Tibial artery (tissue), 4 donors: ENCODE measurements at regions of chr6 and their contacts with region 1.

Region 1: GRCh38 chr6:168370310-168370991 is 50.9 kb upstream of the DACT2 start:
- DNase-seq: peak; percentile 57 to 84
- H3K4me3 ChIP-seq: no peak overlapping the region
- H3K27ac ChIP-seq: no peak overlapping the region
- H3K4me1 ChIP-seq: peaks cover 0 to 6% (median 0%) of the 10 kb centered on the region in 4 donors
- H3K27me3 ChIP-seq: no peaks in the 10 kb centered on the region
- CTCF ChIP-seq: peak; percentile 92 to 94

Region 2: DNA sequence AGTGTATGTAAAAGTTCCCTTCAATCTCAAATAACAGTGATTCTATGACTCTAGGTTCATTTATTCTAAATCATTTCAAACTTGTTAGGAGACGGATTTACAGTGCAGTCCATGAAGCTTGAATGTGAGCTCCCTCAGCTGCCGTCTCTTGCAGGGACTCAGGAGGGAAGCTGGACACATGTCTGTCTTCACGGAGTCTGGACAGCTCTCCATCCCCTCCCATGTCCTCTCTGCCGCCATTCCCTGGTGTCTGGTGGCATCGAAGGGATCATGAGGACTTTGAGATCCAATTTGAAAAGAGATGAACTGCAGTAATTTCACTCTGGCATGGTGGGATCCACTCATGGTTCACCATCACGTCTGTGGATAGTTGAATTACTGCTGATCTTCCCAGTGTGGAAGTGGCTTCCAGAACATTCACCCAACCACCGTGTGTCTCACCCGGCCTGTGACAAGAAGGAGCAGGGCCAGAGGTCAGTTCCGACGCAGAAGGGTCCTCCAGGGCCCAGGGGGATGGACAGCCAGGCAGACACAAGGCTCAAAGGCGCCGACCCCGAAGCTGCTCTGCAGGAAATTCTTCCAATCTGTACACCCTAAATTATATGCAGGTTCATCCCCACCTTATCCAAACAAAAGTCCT is 513.1 kb after region 1 on chr6:
- intact Hi-C with region 1: loop called (anchors 2 kb)
- DNase-seq: no peak
- H3K4me3 ChIP-seq: no peak overlapping the region
- H3K27ac ChIP-seq: no peak overlapping the region
- H3K4me1 ChIP-seq: peaks cover 0 to 4% (median 1%) of the 10 kb centered on the region in 4 donors
- H3K27me3 ChIP-seq: peaks cover 0 to 4% of the 10 kb centered on the region in 2 donors
- CTCF ChIP-seq: no peak